BJ (cell line): ENCODE measurements at regions of chr1 and their contacts with region 1.

Region 1: DNA sequence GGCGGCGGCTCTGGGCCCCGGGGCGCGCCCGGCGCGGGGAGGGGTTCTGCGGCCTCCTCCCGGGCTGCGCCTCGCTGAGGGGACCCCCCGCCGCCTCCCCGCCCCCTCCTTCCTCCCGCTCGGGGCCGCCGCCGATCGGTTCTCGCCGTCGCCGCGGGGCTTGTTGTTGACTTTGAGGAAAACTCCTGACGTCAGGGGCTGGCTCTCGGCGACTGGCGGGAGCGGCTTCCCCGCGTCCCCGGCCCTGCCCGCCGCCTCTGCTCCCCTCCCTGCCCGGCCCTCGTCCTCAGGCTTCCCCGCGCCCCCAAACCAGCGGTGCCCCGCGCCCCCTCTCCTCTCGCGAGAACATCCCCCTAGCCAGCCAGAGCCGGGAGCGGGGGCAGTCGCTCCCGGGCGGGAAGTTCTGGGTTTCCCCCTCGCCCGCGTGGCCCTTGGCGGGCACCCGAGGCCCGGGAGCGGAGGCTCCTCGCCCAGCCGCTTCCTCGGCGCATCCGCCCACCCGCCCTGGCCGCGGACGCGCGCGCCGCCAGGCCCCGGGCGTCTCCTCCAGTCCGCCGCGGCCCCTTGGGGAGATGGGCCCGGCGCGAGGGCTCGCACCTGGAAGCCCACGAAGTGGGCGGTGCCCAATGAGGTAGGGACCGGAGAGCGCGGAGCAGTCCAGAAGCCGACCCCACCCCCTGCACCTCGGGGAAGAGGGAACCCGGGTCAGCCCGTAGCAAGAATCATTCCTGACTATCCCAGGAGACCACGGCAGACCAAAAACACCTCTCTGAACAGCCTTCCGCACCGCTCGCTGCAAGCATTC is 611 bp upstream of the AKT3 start:
- DNase-seq: no peak
- H3K4me3 ChIP-seq: peak overlapping the region; percentile 82
- H3K27me3 ChIP-seq: no peaks in the 10 kb centered on the region
- CTCF ChIP-seq: no peak

Region 2: GRCh38 chr1:243501002-243501401 is 349.7 kb before region 1 on chr1:
- CTCF ChIA-PET with region 1: no interaction called
- POLR2A ChIA-PET with region 1: interaction called, 14 read pairs
- DNase-seq: no peak
- H3K4me3 ChIP-seq: no peak overlapping the region
- H3K27me3 ChIP-seq: no peaks in the 10 kb centered on the region
- CTCF ChIP-seq: no peak

Region 3: DNA sequence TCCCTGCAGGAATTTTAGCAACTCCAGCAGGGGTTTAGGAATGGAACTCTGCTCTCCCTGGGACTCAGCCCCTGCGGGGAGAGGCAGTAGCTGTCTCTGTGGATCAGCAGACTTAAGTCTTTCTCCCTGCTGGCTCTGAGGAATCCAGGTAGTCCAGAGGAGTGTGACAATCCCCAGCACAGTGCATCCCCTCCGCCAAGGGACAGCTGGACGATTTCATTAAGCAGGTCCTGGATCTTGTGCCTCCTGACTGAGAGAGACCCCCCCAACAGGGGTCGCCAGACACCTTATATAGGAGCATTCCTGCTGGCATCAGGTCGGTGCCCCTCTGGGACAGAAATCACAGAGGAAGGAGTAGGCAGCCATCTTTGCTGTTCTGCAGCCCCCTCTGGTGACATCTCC is 31.2 kb before region 1 on chr1:
- CTCF ChIA-PET with region 1: no interaction called
- POLR2A ChIA-PET with region 1: no interaction called
- DNase-seq: no peak
- H3K4me3 ChIP-seq: no peak overlapping the region
- H3K27me3 ChIP-seq: no peaks in the 10 kb centered on the region
- CTCF ChIP-seq: no peak